Activated B cell treated with CpG ODN at 0.5 μM for 24 hours (primary cell): ENCODE measurements at regions of chr4 and their contacts with region 1.

Region 1: DNA sequence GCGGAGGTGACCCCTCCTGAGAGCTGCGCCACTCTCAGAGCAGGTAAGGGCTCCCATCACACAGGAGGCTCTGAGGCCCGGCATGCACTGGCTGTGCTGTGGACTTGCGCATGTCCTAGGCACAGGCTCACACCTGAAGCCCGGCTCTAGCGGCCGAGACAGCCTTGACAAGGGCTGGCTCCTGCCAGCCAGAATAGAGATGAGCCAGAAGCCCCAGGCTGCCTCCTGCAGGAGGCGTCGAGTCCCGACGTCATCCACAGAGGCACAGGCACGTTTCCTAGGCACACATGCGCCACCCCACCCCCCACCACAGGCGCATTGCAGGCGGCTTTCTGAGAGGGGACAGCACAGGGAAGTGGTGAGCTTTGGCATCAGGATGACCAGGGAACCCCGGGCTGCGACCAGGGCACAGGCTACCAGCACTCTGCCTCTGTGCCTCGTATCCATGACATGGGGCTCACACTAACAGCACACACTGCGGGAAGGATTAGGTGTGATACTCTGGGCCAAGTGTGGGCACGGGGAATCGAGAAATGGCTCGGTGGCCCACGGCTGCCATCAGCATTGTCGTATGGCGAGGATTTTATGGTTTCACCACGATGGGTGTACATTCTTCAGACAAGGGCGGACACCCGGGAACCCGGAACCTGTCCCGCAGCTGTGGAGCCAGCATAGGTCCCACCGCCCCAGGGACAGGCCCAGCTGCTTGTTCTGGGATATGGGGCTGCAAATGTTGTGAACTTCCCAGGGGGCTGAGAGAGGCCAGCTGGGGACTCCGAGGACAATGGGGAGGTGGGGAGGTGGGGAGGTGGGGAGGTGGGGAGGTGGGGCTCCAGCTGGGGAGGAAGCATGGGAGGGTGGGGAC is 90.7 kb upstream of the ADRA2C start:
- DNase-seq: no peak
- ATAC-seq: no peak
- H3K4me3 Mint-ChIP-seq: no peak overlapping the region
- H3K27ac Mint-ChIP-seq: no peak overlapping the region
- H3K4me1 Mint-ChIP-seq: no peaks in the 10 kb centered on the region
- H3K27me3 Mint-ChIP-seq: peaks cover 13% of the 10 kb centered on the region
- CTCF ChIP-seq: no peak

Region 2: DNA sequence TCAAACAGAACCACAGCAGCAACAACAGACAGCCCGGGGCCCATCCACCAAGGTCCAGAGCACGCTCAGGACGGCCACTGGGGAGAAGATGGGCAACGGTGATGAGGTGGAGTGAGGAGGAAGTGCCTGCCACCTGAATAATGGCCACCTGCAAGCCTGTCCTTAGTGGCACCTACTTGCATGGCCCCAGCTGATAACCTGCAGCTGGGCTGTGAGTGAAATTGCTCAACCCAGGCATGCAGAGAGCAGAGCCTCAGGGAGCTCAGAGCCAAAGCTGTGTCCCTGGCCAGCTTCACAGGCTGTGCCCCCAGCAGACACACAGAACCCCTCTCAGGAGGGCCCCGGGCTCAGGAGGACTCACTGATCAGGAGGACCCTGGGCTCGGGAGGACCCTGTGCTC is 11.7 kb before region 1 on chr4:
- CTCF ChIA-PET with region 1: no interaction called
- POLR2A ChIA-PET with region 1: no interaction called
- intact Hi-C with region 1: loop called (anchors 1 kb)
- DNase-seq: no peak
- ATAC-seq: no peak
- H3K4me3 Mint-ChIP-seq: no peak overlapping the region
- H3K27ac Mint-ChIP-seq: no peak overlapping the region
- H3K4me1 Mint-ChIP-seq: peaks cover 13% of the 10 kb centered on the region
- H3K27me3 Mint-ChIP-seq: peaks cover 16% of the 10 kb centered on the region
- CTCF ChIP-seq: no peak

Region 3: GRCh38 chr4:4362991-4363697 is 687.7 kb after region 1 on chr4:
- CTCF ChIA-PET with region 1: no interaction called
- POLR2A ChIA-PET with region 1: no interaction called
- intact Hi-C with region 1: no loop called
- DNase-seq: no peak
- ATAC-seq: no peak
- H3K4me3 Mint-ChIP-seq: no peak overlapping the region
- H3K27ac Mint-ChIP-seq: no peak overlapping the region
- H3K4me1 Mint-ChIP-seq: no peaks in the 10 kb centered on the region
- H3K27me3 Mint-ChIP-seq: peaks cover 40% of the 10 kb centered on the region
- CTCF ChIP-seq: no peak